T-cell (primary cell): ENCODE measurements at regions of chr10 and their contacts with region 1.

Region 1: DNA sequence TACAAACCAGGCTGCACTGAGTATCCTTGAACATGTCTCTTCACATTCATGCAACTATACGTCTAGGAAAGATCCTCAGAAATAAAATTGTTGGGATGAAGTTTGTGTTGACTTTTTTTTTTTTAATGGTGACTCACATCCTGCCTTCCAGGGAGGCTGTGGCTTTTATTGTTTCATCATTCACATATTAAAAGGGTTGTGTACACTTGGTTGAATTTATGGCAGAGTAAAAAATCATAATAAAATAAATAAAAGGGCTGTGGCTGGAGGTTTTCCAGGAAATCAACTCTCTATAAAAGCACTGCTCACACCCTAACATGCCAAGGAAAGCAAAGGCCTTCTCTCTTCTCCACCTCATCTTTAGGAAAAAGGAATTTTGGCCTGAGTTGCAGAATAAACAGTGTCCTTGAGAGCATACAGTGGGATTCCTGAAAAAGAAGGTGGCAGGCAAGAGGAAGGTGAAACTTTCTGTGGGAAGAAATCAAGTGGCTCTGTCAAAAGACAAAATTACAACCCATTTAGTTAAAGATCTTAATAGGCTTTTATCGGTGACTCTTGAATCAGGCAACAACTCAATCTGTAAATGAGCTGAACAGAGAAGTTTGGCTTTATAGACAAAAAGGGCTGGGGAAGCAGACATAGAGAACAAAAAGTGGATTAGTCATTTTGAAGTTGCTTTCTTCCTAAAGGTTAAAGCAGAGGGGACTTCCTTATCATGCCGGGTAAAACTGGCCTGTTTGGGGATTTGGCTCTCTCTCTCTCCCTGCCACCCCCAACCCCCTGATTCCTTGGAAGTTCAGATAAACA is 41.6 kb upstream of the FHIP2A start:
- DNase-seq: no peak
- ATAC-seq: no peak
- H3K4me3 ChIP-seq: no peak overlapping the region
- H3K4me3 Mint-ChIP-seq: no peak overlapping the region
- H3K27ac ChIP-seq: no peak overlapping the region
- H3K27ac Mint-ChIP-seq: no peak overlapping the region
- H3K4me1 ChIP-seq: no peaks in the 10 kb centered on the region
- H3K4me1 Mint-ChIP-seq: no peaks in the 10 kb centered on the region
- H3K27me3 ChIP-seq: no peaks in the 10 kb centered on the region
- H3K27me3 Mint-ChIP-seq: peaks cover 0 to 12% of the 10 kb centered on the region in 2 donors

Region 2: DNA sequence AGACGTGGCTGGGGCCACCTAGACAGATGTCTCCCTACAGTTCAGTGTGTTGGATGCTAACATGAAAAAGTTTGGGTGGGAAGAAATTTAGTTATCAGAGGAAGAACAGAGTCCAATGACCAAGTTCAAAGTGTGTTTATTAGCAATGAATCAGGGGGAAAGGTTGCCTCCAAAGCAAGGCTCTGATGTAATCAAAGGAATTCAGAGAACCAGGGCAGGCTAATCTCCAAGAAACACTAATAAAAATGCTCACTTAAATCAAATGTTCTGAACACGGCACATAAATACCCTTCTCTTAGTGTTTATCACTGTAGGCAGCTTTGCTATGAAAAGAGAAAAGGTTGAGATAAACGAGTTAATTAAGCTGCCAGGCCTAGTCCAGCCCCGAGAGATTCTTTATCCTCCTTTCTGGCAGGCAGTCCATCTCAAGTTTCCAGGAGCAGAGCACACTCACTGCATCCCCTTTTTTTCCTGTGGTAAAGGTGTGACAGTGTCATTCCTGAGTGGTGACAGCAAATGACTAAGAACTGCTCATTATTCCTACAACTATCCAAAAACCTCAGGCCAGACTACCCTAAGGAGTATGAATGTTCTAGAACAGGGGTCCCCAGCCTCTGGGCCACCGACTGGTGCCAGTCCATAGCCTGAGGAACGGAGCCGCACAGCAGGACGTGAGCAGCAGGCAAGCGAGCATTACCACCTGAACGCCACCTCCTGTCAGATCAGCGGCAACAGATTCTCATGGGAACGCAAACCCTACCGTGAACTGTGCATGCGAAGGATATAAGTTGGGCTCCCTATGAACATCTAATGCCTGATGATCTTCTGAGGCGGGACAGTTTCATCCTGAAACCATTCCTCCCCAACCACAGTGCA is 25.3 kb before region 1 on chr10:
- CTCF ChIA-PET with region 1: no interaction called
- POLR2A ChIA-PET with region 1: no interaction called
- DNase-seq: no peak
- ATAC-seq: no peak
- H3K4me3 ChIP-seq: no peak overlapping the region
- H3K4me3 Mint-ChIP-seq: no peak overlapping the region
- H3K27ac ChIP-seq: no peak overlapping the region
- H3K27ac Mint-ChIP-seq: no peak overlapping the region
- H3K4me1 ChIP-seq: no peaks in the 10 kb centered on the region
- H3K4me1 Mint-ChIP-seq: no peaks in the 10 kb centered on the region
- H3K27me3 ChIP-seq: peaks cover 0 to under 1% of the 10 kb centered on the region in 2 experiments
- H3K27me3 Mint-ChIP-seq: peaks cover under 1 to 4% of the 10 kb centered on the region in 2 donors

Region 3: DNA sequence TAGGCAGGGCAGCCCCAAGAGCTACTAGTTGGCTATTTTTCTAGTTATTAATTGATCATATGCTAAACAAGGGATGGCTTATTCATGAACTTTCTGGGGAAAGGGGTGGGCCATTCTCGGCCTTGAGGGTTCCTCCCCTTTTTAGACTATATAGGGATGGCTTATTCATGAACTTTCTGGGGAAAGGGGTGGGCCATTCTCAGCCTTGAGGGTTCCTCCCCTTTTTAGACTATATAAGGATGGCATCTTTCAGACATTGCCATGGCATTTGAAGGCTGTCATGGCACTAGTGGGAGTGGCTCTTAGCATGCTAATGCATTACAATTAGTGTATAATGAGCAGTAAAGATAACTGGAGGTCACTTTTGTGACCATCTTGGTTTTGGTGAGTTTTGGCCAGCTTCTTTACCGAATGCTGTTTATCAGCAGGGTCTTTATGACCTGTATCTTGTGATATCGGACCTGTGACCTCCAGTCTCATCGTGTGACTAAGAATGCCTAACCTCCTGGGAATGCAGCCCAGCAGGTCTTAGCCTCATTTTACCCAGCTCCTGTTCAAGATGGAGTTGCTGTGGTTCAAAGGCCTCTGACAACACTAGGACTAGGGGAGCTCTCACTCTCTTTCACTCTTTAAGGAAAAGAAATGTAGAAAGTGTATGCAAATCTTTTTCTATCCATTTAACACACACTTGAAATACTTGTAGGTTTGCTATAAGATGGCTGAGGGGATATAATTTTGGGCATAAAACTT is 49.3 kb after region 1 on chr10:
- CTCF ChIA-PET with region 1: interaction called in 1 of 2 experiments, 12 read pairs
- POLR2A ChIA-PET with region 1: no interaction called
- DNase-seq: no peak
- ATAC-seq: no peak
- H3K4me3 ChIP-seq: no peak overlapping the region
- H3K4me3 Mint-ChIP-seq: no peak overlapping the region
- H3K27ac ChIP-seq: no peak overlapping the region
- H3K27ac Mint-ChIP-seq: no peak overlapping the region
- H3K4me1 ChIP-seq: peaks cover under 1 to 12% of the 10 kb centered on the region in 2 experiments
- H3K4me1 Mint-ChIP-seq: peaks cover 42 to 56% (median 44%) of the 10 kb centered on the region in 3 donors
- H3K27me3 ChIP-seq: no peaks in the 10 kb centered on the region
- H3K27me3 Mint-ChIP-seq: no peaks in the 10 kb centered on the region